Caco-2 (cell line): ENCODE measurements at regions of chr10 and their contacts with region 1.

Region 1: GRCh38 chr10:103578782-103579382 is 85.4 kb downstream of the NEURL1 start:
- DNase-seq: peak; percentile 63 to 75
- H3K4me3 ChIP-seq: no peak overlapping the region
- H3K4me3 Mint-ChIP-seq: no peak overlapping the region
- H3K27ac Mint-ChIP-seq: no peak overlapping the region
- H3K4me1 ChIP-seq: peaks cover 28% of the 10 kb centered on the region
- H3K4me1 Mint-ChIP-seq: peaks cover 41% of the 10 kb centered on the region
- H3K27me3 ChIP-seq: no peaks in the 10 kb centered on the region
- H3K27me3 Mint-ChIP-seq: no peaks in the 10 kb centered on the region
- CTCF ChIP-seq: no peak

Region 2: DNA sequence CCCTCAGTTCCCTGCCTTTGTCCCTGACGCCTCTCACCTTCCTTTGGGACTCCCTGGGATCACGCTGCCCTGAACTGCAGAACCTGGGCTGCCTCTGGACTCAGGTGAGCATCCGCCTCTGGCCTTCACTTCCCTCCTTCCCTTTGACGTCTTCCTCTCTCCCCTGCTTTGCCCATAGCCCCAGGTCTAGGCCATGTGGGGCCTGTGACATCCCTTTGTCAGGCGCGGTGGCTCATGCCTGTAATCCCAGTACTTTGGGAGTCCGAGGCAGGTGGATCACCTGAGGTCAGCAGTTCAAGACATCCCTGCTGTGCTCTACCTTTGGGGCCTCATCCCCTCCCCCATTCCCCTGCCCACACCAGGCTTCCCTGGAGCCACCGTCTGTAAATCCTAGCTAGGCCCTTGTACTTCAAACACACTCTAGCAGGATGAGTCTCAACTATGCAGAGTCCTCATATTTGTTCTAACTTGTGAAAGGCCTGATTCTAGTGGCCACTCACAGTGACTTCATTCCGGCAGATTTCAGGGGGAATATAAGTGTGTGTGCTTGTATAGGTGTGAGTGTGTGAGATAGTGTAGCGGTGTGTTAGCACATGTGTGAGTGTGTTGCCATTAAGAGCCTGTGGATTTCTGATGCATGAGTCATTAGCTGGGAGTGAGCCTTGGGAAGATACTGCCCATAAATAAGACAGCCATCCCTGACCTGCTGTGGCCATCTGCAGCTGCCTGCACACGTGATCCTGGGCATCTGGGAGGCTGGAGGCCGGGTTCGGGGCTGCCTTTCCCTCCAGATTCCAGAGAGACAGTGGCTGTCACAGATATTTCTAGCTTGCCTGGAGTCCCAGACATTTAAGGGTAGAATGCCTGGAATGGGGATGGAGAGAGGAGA is 87.1 kb before region 1 on chr10:
- CTCF ChIA-PET with region 1: no interaction called
- POLR2A ChIA-PET with region 1: no interaction called
- intact Hi-C with region 1: loop called (anchors 5 kb)
- DNase-seq: peak; percentile 45 to 69
- H3K4me3 ChIP-seq: no peak overlapping the region
- H3K4me3 Mint-ChIP-seq: peak overlapping the region; percentile 2
- H3K27ac Mint-ChIP-seq: no peak overlapping the region
- H3K4me1 ChIP-seq: peaks cover 23% of the 10 kb centered on the region
- H3K4me1 Mint-ChIP-seq: peaks cover 14% of the 10 kb centered on the region
- H3K27me3 ChIP-seq: peaks cover 3% of the 10 kb centered on the region; the same call in 1 of the 2 replicates
- H3K27me3 Mint-ChIP-seq: peaks cover 3% of the 10 kb centered on the region
- CTCF ChIP-seq: no peak

Region 3: GRCh38 chr10:103507235-103508191 is 71.4 kb before region 1 on chr10:
- CTCF ChIA-PET with region 1: interaction called, 3 read pairs
- POLR2A ChIA-PET with region 1: no interaction called
- intact Hi-C with region 1: loop called (anchors 5 kb)
- DNase-seq: peak; percentile 38 to 88
- H3K4me3 ChIP-seq: no peak overlapping the region
- H3K4me3 Mint-ChIP-seq: no peak overlapping the region
- H3K27ac Mint-ChIP-seq: no peak overlapping the region
- H3K4me1 ChIP-seq: peaks cover 16% of the 10 kb centered on the region
- H3K4me1 Mint-ChIP-seq: peaks cover 18% of the 10 kb centered on the region
- H3K27me3 ChIP-seq: no peaks in the 10 kb centered on the region
- H3K27me3 Mint-ChIP-seq: peaks cover under 1% of the 10 kb centered on the region
- CTCF ChIP-seq: peak in 1 of 2 experiments; percentile 38